ENCODE measurements at regions of chr2 and their contacts with region 1.

Region 1: DNA sequence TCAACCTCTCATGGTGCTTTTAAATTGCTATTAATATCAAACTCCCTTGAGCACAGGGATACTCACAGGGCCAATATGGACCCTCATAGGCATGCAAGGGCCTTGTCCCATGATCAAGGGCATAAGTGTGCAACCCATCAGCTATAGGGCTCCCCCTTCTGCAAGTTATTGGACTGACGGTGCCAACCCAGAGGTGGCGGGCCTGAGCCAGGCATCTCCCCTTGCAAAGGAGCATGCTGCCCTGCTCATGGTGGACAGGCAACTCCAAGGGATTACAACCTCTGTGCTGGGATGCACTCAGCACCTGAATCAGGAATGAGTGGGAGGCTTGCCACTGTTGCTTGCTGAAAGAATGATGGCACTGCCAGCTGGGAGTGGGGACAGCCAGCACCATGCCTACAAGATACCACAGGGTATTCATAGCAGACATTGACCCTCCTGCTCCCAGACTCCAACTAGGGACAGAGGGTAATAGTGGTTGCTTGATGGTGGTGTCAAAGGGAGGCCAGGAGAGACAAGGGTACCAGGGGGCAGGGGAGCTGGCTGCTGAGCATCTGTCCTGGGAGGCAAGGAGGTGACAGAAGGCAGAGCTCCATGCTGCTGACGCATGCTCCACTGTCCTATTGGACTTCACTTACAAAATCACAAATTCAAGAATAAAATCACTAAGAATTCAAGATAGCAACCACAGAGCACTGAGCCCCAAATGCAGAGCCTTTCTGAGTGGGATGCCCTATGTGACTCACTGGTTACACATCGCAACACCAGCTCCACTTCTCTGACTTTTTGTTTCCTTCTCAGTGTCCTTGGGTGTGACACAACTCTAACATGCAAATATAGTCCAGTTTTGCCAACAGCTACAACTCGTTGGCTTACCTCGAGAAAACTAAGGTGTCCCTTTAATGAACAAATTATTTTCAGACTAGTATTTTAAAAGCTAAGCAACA is 157.1 kb upstream of the CCDC150 start:
- DNase-seq: no peak
- ATAC-seq: no peak

Region 2: DNA sequence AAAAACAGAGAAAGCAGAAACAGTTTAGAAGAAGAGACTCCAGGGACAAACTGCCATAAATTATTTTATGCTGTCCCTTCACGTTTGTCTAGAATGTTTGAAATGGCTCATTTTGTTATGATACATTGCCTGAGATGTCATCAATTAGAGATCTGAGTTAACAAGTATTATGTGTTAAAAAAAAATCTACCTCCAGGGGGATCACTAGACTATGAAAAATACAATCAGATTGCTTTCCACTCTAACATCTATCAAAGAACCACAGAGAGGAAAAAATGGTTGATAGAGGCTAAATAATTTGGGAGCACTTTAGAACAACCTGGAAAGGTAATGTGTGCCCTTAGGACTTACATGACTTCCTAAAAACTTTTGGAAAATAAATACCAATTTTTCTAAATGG is 53.4 kb after region 1 on chr2:
- intact Hi-C with region 1: loop called (anchors 5 kb)
- DNase-seq: no peak
- ATAC-seq: no peak

Region 3: DNA sequence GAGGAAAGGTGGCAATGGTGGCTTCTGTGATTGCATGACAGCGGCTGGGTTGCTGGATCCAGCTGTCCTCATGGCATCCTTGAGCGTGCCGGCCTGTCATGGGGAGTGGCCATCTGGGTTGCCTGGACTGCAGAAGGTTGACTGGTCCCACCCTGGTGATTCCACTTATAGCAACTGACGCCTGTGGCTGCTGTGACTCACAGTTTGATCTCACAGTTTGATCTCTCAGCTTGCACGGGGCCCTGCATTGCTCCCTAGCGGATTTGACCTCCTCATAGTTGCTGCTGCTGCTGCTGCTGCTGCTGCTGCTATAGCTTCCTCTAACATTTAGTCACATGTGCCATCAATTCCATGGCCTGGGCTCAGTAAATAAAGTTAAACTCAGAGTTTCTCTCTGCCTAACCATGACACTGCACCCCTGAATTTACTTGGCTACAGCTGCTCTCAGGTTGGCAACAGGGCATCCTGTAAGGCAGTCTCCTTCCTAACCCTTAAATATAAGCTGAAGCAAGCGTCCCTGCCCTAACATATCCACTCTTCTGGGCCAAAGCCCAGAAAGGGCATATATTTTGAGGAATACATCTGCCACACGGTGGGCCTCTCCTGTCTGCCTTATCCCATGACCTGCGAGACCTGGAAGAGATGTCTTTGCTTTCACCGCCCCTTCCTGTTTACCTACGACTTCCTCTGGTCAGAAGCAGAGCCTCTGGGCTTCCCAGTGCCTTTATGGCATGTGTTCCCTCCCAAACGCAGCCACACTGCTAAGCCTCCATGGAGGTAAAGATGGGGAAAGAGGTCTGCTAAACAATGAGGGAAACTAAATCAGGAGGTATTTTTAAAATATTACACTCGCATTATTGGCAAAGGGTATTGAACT is 119.3 kb after region 1 on chr2:
- intact Hi-C with region 1: no loop called
- DNase-seq: peak; percentile 66
- ATAC-seq: peak; percentile 87

Region 4: DNA sequence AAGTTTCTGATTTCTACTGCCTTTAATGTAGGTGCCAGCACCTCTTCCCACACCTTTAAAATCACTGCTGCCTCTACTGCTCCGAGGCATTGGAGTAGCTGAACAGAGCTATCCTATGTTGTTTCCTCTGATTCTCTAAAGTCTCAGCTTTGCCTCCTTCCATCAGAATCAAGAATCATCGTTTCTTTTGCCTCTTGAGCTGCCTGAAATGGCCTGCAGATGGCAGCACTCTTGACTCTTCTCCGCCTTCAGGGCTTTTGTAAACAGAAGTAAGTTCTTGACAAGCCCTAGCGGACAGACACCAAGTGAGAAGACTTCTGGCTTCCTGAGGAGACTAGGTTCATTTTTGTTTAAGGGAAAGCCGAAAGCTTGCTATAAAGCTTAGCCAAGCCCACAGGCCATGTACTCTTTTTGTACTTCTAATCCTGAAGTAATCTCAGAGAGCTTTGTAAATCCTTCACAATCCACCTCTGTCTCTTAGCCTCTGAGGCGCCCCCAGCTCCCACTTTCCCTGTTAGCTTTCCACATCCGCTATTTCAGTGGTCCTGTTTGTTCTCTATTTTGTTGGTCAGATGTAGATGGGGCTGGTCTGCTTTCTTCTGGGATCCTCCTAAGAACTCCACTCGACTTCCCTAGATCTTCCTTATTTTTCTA is 268.7 kb after region 1 on chr2:
- intact Hi-C with region 1: loop called (anchors 10 kb)
- DNase-seq: no peak
- ATAC-seq: peak; percentile 57

Measured in Right ventricle myocardium inferior (tissue), 1 donor.